ENCODE measurements at regions of chr10 and their contacts with region 1.

Region 1: DNA sequence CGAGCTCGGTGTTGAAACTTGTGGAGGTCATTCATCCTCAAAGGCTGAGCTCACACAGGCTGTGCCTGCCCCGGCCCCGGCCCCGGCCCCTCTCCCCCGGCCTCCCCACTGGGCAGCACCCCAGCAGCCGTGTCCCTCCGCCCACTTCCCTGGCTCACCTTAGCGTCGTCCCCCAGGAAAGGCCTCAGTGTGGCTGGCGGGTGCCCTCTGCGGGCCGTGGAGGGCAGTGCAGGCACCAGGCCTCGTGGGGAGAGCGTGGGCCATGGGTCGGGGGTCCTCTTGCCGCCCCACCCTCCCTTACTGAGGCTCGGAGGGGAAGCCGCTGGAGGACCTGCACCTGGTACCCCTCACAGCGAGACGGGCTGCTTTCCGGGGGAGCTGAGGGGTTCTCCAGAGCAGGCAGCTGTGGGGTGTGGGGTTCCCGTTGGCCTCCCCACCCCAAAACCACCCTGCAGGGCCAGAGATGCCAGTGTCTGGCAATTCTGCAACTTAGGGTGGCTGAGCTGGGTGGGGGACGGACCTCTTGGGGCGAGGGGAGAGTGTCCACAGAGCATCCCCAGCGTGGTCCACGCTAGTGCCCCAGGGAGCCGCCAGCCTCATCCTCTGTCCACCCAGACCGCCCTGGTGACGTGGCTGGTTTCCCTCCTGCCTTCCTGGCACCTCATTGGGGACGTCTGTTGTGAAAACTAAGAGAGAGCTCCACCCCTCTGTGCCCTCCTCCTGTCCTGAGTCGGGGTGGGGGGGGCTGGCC is 44.2 kb upstream of the DPYSL4 start:
- DNase-seq: no peak
- H3K4me3 ChIP-seq: no peak overlapping the region
- H3K27ac ChIP-seq: no peak overlapping the region
- H3K4me1 ChIP-seq: peaks cover 0 to 7% (median 3%) of the 10 kb centered on the region in 4 donors
- H3K27me3 ChIP-seq: no peaks in the 10 kb centered on the region
- CTCF ChIP-seq: peak; percentile 47 to 95 (median 68)
- EP300 ChIP-seq: no peak
- POLR2A ChIP-seq: no peak

Region 2: GRCh38 chr10:131885391-131886161 is 257.0 kb before region 1 on chr10:
- intact Hi-C with region 1: loop called (anchors 2 kb)
- DNase-seq: peak; percentile 86
- H3K4me3 ChIP-seq: no peak overlapping the region
- H3K27ac ChIP-seq: no peak overlapping the region
- H3K4me1 ChIP-seq: peaks cover 0 to 7% (median 6%) of the 10 kb centered on the region in 4 donors
- H3K27me3 ChIP-seq: peaks cover 0 to 8% (median 3%) of the 10 kb centered on the region in 3 donors
- CTCF ChIP-seq: peak; percentile 90 to 97 (median 92)
- EP300 ChIP-seq: no peak
- POLR2A ChIP-seq: no peak

Region 3: GRCh38 chr10:132036887-132037675 is 105.5 kb before region 1 on chr10:
- intact Hi-C with region 1: loop called (anchors 1 kb)
- DNase-seq: no peak
- H3K4me3 ChIP-seq: peak overlapping the region in 3 of 4 donors; percentile 41 to 68 (median 58)
- H3K27ac ChIP-seq: peak overlapping the region in 2 of 4 donors; percentile 29 to 65
- H3K4me1 ChIP-seq: peaks cover 0 to 22% (median 14%) of the 10 kb centered on the region in 4 donors
- H3K27me3 ChIP-seq: peaks cover 2 to 46% (median 15%) of the 10 kb centered on the region in 3 donors
- CTCF ChIP-seq: no peak
- EP300 ChIP-seq: no peak
- POLR2A ChIP-seq: no peak

Measured in sigmoid colon (tissue), 7 donors.